AG04450 (cell line): ENCODE measurements at regions of chr2 and their contacts with region 1.

Region 1: DNA sequence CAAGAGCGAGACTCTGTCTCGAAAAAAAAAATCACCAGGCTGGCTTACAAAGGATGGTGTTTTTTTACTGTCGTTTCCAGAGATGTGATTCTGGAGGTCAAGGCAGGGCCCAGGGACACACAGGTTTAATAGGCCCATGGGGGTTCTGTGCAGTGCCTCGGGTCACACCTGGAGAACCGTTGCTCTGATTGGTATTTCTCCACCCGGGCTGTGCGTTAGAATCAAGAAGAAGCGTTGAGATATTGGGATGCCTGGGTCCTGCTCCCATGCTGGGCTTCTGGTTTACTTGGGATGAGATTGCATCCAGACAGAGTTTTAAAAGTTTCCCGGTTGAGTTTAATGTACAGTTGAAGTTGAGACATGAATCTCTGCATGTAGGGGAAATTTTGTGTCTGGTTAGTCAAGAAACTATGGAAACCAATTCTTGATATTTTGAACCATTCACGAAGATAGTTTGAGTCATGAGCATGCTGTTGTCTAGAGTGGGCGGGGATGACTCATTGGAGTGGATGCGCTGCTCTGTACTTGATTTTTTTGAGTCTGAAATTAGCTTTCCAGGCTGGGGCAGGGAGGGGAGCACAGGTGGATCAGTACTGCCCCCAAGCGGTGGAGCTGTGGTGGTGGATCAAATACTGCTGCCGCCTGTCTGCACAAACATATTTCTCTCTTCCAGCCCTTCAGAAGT is 50.1 kb downstream of the GREB1 start:
- DNase-seq: peak; percentile 90
- H3K4me3 ChIP-seq: no peak overlapping the region
- H3K27ac ChIP-seq: peak overlapping the region; percentile 68
- H3K27me3 ChIP-seq: peaks cover 21% of the 10 kb centered on the region
- CTCF ChIP-seq: peak; percentile 95

Region 2: DNA sequence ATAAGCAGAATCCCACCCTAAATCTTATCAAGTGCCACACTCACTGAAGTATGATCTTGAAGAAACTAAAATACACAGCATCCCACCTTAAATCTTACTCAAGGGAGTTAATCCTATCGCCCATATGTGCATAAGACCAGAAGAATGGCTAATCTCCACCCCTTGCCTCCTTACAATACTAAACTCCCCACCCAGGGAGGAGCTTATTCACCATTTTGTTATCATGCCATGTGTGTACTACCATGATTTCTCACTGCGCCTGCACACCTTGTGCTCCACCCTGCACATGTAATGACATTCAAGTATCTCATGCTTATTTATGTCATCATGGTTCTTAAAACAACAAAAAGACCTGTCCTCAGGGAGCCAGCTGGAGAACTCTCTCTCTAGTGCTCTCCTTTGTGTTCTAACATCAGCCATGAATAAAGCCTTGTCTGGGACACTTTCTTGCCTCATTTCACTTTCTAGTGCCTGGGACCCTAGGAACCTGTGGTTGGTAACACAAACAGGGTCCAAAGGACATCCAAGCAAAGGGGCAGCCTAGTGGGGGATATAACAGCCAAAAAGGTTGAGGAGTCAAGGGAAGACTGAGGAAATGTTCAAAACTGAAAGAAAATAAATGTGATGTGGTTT is 341.3 kb before region 1 on chr2:
- CTCF ChIA-PET with region 1: no interaction called
- POLR2A ChIA-PET with region 1: no interaction called
- DNase-seq: no peak
- H3K4me3 ChIP-seq: no peak overlapping the region
- H3K27ac ChIP-seq: no peak overlapping the region
- H3K27me3 ChIP-seq: no peaks in the 10 kb centered on the region
- CTCF ChIP-seq: no peak

Region 3: DNA sequence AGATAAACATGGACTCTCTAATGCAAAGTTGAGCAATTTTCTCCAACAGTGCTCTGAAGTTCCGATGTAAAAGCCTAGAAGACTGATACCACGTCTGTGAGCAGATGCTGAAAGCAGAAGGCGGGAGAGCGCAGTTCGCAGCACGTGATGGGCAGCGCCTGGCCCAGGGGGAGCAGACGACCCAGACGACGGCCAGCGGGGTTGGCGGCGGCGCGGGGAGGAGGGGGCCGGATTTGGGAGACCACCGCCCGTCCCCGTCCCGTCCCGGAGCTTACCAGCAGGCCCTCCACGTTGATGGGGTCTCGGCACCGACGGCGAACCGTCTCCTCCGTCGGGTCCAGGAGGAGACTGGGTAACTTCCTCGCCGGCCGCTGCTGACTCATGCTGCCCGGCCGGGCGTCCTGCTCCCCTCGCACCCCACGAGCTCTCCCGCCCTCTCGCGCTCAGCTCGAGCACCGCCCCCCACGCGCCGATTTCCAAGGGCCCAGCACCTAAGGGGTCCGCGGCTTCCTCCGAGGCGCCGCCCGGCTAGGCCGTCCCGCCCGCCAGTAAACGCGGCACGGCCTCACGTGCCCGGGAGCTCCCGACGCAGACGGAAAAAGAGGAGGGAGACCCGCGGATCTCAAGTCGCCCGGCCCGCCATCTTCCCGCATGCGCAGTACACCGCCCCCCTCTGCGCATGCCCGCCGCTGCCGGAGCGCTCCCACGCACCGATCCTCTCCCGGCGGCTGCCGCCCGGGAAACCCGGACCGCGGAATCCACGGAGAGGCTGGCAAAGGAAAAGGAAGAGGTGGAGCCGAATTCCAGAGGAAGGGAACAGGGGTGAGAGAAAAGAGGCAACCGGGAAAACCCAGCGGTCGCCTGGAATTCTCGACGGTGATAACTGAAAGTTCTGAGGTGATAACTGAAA is 118.2 kb before region 1 on chr2 and contains the start of gene E2F6:
- CTCF ChIA-PET with region 1: interaction called, 43 read pairs
- POLR2A ChIA-PET with region 1: no interaction called
- DNase-seq: peak; percentile 81
- H3K4me3 ChIP-seq: peak within 1 kb of the TSS; percentile 72
- H3K27ac ChIP-seq: peak within 1 kb of the TSS; percentile 91
- H3K27me3 ChIP-seq: peaks cover 5% of the 10 kb centered on the region
- CTCF ChIP-seq: no peak
- polyA plus RNA-seq, gene E2F6: 12.0 and 17.9 TPM in 2 replicates

Region 4: DNA sequence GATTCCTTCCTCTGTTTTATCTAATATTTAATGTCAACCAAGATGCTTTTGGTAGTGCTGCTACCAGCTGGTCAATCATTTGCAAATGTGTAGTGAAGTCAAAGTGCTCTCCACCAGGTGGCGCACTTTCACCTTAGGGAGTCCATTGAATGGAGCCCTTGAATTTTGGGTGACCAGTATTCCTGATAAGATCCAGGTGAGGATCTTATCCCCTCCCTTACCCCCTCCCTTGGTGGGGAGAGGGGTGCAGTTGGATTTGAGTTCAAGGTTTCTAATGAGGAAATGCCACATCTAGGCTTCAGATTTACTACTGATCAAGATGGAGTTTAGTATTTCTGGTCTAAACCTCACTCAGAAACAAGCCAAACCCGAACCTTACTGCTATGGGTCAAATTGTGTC is 106.0 kb before region 1 on chr2:
- CTCF ChIA-PET with region 1: interaction called, 193 read pairs
- POLR2A ChIA-PET with region 1: interaction called, 6 read pairs
- DNase-seq: peak; percentile 76
- H3K4me3 ChIP-seq: no peak overlapping the region
- H3K27ac ChIP-seq: no peak overlapping the region
- H3K27me3 ChIP-seq: peaks cover 61% of the 10 kb centered on the region
- CTCF ChIP-seq: peak; percentile 87

Region 5: DNA sequence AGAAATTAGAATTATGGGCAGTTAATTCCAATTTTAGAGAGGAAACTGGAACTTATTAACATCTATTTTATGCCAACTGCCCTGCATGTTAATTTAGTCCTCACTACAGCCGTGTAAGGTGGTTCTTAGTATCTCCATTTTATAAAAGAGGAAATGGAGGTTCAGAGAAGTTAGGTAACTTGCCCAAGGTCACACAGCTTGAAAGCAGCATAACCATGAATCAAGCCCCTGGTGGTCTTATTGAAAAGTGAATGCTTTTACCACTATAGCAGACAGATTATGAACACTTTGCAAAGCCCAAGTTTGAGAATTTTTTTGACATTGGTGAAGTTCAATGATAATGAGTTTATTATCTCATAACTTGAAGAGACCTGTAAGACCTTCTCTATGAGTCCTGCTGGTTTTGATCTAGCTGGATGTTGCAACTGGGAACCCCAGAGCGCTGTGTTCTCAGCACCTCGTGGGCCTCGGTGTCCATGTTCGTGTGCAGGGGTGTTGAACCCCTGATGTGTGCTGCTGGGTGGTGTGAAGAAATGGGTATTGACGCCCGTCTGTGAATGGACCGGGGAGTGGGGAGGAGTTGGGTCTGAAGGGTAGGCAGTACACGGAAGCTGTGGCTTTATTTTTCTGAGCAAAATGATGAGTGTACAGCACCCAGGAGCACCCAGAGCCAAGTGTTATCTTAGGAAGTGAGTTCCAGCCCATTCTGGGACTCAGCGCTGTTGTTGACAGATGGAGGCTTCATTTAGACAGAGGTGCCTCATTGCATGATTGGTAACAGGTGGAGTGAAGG is 40.4 kb before region 1 on chr2:
- CTCF ChIA-PET with region 1: interaction called, 12 read pairs
- POLR2A ChIA-PET with region 1: no interaction called
- DNase-seq: no peak
- H3K4me3 ChIP-seq: no peak overlapping the region
- H3K27ac ChIP-seq: no peak overlapping the region
- H3K27me3 ChIP-seq: peaks cover 33% of the 10 kb centered on the region
- CTCF ChIP-seq: no peak

Region 6: GRCh38 chr2:11556101-11556821 is 27.7 kb before region 1 on chr2:
- CTCF ChIA-PET with region 1: interaction called, 15 read pairs
- POLR2A ChIA-PET with region 1: no interaction called
- DNase-seq: no peak
- H3K4me3 ChIP-seq: no peak overlapping the region
- H3K27ac ChIP-seq: no peak overlapping the region
- H3K27me3 ChIP-seq: peaks cover 49% of the 10 kb centered on the region
- CTCF ChIP-seq: no peak

Region 7: DNA sequence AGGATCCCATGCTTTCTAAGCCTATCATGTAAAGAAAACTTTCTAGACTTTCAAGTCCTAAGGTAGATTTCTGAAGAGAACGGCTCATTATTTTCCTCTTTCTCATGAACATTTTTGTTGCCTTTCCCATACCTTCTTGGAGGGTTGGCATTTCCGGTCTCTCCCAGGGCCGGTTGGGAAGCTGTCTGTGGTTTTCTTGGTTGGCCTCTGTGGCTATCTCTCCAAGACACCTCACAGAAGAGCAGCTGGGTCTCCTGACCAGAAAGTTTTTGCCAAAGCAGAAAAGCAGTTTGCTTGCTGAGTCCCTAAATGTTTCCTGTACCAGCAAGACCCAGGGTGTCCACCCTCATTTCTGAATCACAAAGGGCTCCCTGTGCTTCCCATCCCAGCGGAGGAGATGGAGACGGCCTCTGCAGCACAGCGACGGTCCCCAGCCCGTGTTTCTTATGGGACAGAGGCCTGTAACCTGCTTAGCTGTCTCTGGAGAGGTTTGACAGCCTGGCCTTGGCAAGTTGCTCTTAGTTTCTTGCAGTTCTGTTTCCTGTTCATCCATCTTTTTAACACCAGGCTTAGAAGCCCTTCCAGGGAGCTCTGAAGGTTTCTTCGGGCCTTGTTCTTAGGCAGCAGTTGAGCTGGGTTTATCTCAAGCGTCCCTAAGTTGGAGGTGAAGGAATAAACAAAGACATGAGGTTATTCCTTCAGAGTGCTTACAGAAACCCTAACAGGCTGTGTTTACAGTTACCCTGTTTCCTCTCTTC is 10.4 kb before region 1 on chr2:
- CTCF ChIA-PET with region 1: interaction called, 25 read pairs
- POLR2A ChIA-PET with region 1: no interaction called
- DNase-seq: no peak
- H3K4me3 ChIP-seq: no peak overlapping the region
- H3K27ac ChIP-seq: peak overlapping the region; percentile 11
- H3K27me3 ChIP-seq: peaks cover 20% of the 10 kb centered on the region
- CTCF ChIP-seq: no peak